SK-N-SH (cell line): ENCODE measurements at regions of chr16 and their contacts with region 1.

Region 1: DNA sequence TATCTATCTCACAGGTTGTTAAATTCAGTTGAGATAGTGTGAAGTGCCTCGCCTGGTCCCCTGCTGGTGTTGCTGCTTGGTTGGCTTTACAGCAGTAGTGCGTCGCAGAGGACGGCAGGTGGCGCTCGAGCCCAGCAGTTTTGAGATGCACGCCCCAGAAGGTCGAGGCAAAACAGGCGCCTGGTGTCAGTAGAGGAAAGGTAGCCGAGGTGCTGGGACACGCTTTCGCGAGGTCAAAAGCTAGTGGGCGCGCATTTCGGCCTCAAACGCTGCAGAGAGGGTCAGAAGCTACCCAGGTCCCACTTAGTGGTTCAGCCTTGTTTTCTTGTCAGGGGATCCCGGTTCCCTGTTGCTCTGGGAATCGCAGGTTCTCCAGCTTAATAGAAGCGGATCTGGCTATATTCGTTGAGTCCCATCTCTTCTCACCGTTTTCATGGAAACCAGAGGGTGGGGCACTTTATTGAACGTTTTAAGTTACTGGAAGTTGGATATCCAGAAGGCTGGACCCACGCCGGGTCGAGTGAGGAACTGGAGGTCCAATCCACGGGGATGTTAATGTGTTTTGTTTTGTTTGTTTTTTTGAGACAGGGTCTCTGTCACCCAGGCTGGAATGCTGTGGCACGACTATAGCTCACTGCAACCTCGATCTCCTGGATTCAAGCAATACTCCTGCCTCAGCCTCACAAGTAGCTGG is 10.3 kb upstream of the ZFP90 start:
- DNase-seq: peak; percentile 89
- H3K4me3 ChIP-seq: peak overlapping the region; percentile 27 to 78; a peak in 3 of 4 replicates
- H3K27ac ChIP-seq: no peak overlapping the region
- H3K4me1 ChIP-seq: peaks cover 10 to 14% of the 10 kb centered on the region in 2 experiments; a peak in 2 of 4 replicates
- H3K27me3 ChIP-seq: no peaks in the 10 kb centered on the region
- CTCF ChIP-seq: peak; percentile 80
- EP300 ChIP-seq: no peak
- RAD21 ChIP-seq: peak; percentile 94

Region 2: DNA sequence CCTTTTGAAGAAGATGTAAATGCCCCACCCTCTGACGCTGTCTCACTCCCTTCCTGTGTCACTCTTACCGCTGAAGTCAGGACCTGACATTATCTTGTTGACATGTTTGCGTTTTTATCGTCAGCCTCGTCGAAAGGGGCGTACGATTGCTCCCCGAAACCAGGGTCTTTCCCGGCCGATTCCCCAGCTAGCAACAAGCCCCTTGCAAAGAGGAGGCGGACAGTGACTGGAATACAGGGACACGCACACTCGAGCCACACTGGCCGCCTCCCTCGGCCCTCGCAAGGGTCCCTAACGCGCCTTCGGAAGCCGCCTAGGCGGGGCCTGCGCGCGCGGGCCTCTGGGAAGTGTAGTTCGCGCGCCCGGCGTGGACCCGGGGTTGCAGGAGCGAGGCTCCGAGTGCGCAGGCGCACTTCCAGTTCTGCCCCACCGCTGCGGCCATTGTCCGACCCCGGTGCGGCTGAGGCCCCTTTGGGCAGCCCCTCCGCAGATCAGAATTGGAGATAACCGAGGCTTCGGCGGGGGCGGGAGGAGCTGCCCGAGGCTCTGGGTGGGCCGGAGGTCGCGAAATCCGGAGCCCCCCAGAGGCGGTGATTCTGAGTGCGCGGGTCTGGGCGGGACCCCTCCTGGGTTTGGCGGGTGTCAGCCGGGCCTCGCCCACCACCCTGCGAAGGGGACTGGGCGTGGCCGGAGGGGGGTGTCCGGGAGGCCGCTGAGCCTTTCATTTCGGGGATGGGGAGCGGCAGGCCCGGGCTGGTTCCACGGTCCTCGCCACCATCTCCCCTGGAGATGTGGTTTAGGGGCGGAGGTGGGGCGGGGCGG is 10.3 kb after region 1 on chr16 and contains the start of gene ZFP90:
- CTCF ChIA-PET with region 1: interaction called, 24 read pairs
- POLR2A ChIA-PET with region 1: no interaction called
- DNase-seq: peak; percentile 99
- H3K4me3 ChIP-seq: peak within 1 kb of the TSS; percentile 63 to 92
- H3K27ac ChIP-seq: peak within 1 kb of the TSS; percentile 30 to 60; a peak in 1 of 4 replicates
- H3K4me1 ChIP-seq: peaks cover 0 to 3% of the 10 kb centered on the region in 2 experiments; a peak in 1 of 4 replicates
- H3K27me3 ChIP-seq: no peaks in the 10 kb centered on the region
- CTCF ChIP-seq: no peak
- EP300 ChIP-seq: no peak
- RAD21 ChIP-seq: no peak
- polyA plus RNA-seq, gene ZFP90: 9.9 and 13.2 TPM in 2 replicates

Region 3: GRCh38 chr16:68800257-68800875 is 271.5 kb after region 1 on chr16:
- CTCF ChIA-PET with region 1: interaction called, 36 read pairs
- POLR2A ChIA-PET with region 1: no interaction called
- DNase-seq: peak; percentile 71
- H3K4me3 ChIP-seq: no peak overlapping the region
- H3K27ac ChIP-seq: no peak overlapping the region
- H3K4me1 ChIP-seq: no peaks in the 10 kb centered on the region
- H3K27me3 ChIP-seq: no peaks in the 10 kb centered on the region; the same call in 1 of the 2 replicates
- CTCF ChIP-seq: peak; percentile 65
- EP300 ChIP-seq: no peak
- RAD21 ChIP-seq: peak; percentile 86

Region 4: GRCh38 chr16:68843482-68844210 is 314.8 kb after region 1 on chr16 and contains the start of gene TANGO6:
- CTCF ChIA-PET with region 1: interaction called, 27 read pairs
- POLR2A ChIA-PET with region 1: no interaction called
- DNase-seq: peak; percentile 89
- H3K4me3 ChIP-seq: peak within 1 kb of the TSS; percentile 69 to 82
- H3K27ac ChIP-seq: peak within 1 kb of the TSS; percentile 69 to 88
- H3K4me1 ChIP-seq: peaks cover 0 to 3% of the 10 kb centered on the region in 2 experiments; a peak in 2 of 4 replicates
- H3K27me3 ChIP-seq: no peaks in the 10 kb centered on the region
- CTCF ChIP-seq: peak; percentile 52
- EP300 ChIP-seq: no peak
- RAD21 ChIP-seq: peak; percentile 45
- polyA plus RNA-seq, gene TANGO6: 5.5 and 6.5 TPM in 2 replicates